CD4-positive, alpha-beta T cell (primary cell): ENCODE measurements at regions of chr9 and their contacts with region 1.

Region 1: DNA sequence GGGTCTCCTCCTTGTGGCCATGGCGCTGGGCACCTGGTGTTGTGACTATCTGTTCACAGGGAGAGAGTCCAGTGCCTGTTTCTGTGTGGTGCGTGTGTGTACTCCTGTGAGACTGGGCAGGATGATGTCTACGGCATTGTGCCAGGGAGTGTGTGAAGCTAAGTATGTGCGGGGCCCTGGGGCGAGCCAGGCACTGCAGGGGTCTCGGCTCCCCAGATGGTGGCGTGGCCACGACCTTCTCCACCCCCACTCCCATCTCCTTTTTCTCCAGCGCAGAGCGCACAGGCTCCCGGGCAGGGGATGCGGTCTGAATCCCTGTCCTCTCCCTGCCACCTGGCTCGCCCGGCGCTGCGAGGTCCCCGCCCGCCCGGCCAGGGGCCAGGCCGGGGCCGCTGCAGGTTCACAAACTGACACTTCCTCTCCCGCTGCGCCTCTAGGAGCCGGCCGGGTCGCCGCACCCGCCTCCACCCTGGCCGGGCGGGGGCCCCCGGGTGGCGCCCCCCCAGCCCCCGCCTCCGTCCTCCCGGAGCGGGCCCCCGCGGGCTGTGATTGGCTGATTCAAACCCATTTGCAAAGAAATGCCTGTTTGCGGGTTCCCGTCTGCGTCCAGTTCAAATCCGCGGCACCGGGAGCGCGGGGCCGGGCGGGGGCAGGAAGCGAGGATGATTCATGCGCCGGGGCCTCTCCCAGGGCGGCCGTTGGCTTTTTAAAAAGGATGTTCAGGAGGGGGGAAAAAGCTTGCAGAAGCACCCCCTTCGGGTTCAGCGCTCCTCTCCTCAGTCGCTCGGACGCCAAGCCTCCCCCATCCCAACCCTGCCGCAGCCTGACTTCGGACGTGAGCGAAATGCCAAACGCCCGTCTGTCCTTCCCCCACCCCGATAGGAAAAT is 790 bp downstream of the PHF19 start:
- DNase-seq: peak; percentile 53 to 93 (median 84)
- ATAC-seq: peak; percentile 49
- H3K4me3 ChIP-seq: peak overlapping the region; percentile 64
- H3K4me3 Mint-ChIP-seq: peak overlapping the region; percentile 85
- H3K27ac ChIP-seq: peak overlapping the region; percentile 87 to 93
- H3K27ac Mint-ChIP-seq: peak overlapping the region; percentile 84
- H3K4me1 ChIP-seq: peaks cover 83% of the 10 kb centered on the region
- H3K4me1 Mint-ChIP-seq: peaks cover 75% of the 10 kb centered on the region
- H3K27me3 ChIP-seq: no peaks in the 10 kb centered on the region
- H3K27me3 Mint-ChIP-seq: no peaks in the 10 kb centered on the region
- CTCF ChIP-seq: no peak

Region 2: DNA sequence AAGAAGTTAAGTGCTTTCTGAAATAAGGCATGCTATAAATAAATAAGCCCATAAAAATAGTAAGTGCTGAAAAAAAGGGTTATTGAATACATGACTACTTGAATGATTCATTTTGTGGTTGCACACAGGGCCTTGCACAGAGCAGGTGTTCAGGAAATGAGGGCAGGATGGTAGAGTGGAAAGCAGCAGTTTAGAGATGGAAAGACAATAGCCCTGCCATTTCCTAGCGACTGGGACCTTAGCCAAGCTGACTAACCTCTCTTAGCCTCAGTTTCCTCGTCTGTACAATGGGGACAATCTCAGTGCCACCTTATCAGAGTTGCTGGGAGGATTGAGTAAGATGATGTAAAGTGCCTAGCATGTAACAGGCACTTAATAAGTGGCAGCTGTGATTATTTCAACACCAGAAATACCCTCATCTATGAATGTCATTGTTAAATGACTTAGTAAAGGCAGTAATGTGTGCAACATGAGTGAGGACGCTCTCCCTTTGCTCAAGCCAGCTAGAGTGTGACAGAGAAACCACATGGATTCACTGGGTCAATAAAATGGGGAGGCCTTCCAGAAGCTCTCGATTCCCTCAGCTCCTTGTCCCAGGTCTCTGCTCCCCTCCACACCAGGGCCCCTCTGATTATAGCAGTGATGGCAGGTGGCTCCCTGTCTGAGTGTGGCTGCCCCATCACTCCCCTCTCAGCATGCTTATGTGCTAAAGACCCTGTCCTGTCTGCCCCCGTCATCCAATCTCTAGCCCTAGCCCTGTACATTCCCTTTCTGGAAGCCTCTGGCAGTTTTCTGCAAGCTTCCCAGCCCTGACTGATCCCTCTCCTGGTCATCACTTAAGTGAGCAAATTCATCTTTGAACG is 16.8 kb after region 1 on chr9:
- CTCF ChIA-PET with region 1: interaction called, 23 read pairs
- POLR2A ChIA-PET with region 1: interaction called, 327 read pairs
- intact Hi-C with region 1: loop called (anchors 1 to 2 kb)
- DNase-seq: peak in 13 of 14 experiments; percentile 50 to 89 (median 59)
- ATAC-seq: peak; percentile 55
- H3K4me3 ChIP-seq: no peak overlapping the region
- H3K4me3 Mint-ChIP-seq: peak overlapping the region; percentile 28
- H3K27ac ChIP-seq: peak overlapping the region; percentile 86 to 88
- H3K27ac Mint-ChIP-seq: peak overlapping the region; percentile 98
- H3K4me1 ChIP-seq: peaks cover 96% of the 10 kb centered on the region
- H3K4me1 Mint-ChIP-seq: peaks cover 77% of the 10 kb centered on the region
- H3K27me3 ChIP-seq: no peaks in the 10 kb centered on the region
- H3K27me3 Mint-ChIP-seq: no peaks in the 10 kb centered on the region
- CTCF ChIP-seq: no peak

Region 3: DNA sequence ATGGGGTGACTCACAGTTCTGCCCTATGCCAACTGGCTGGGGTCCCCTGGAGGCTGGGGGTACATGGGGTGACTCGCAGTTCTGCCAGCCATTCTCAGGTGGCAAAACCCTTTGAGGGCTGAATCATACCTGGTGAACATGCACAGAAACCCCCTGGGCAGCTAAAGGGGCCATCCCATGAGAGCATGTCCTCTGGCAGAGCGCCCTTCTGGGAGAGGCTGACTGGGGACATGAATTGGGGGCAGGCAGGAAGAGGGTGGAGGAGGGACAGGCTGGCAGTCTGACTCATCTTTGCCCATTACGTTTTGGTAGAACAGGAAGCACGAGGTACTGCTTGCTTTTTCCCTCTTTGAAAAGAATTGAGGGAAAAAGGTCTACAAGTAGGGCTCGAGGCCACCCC is 33.7 kb after region 1 on chr9:
- CTCF ChIA-PET with region 1: no interaction called
- POLR2A ChIA-PET with region 1: interaction called, 24 read pairs
- intact Hi-C with region 1: loop called in 1 of 2 experiments (anchors 5 kb)
- DNase-seq: peak in 11 of 14 experiments; percentile 35 to 81 (median 55)
- ATAC-seq: peak; percentile 61
- H3K4me3 ChIP-seq: no peak overlapping the region
- H3K4me3 Mint-ChIP-seq: peak overlapping the region; percentile 30
- H3K27ac ChIP-seq: peak overlapping the region; percentile 74 to 84
- H3K27ac Mint-ChIP-seq: peak overlapping the region; percentile 77
- H3K4me1 ChIP-seq: peaks cover 83% of the 10 kb centered on the region
- H3K4me1 Mint-ChIP-seq: peaks cover 81% of the 10 kb centered on the region
- H3K27me3 ChIP-seq: no peaks in the 10 kb centered on the region
- H3K27me3 Mint-ChIP-seq: no peaks in the 10 kb centered on the region
- CTCF ChIP-seq: no peak

Region 4: GRCh38 chr9:120928483-120929228 is 52.5 kb after region 1 on chr9:
- CTCF ChIA-PET with region 1: interaction called, 8 read pairs
- POLR2A ChIA-PET with region 1: interaction called, 284 read pairs
- intact Hi-C with region 1: loop called in 1 of 2 experiments (anchors 1 kb)
- DNase-seq: peak; percentile 58 to 90 (median 78)
- ATAC-seq: peak; percentile 39
- H3K4me3 ChIP-seq: peak overlapping the region; percentile 90
- H3K4me3 Mint-ChIP-seq: peak overlapping the region; percentile 88
- H3K27ac ChIP-seq: peak overlapping the region; percentile 98 to 100
- H3K27ac Mint-ChIP-seq: peak overlapping the region; percentile 100
- H3K4me1 ChIP-seq: peaks cover 90% of the 10 kb centered on the region
- H3K4me1 Mint-ChIP-seq: peaks cover 91% of the 10 kb centered on the region
- H3K27me3 ChIP-seq: no peaks in the 10 kb centered on the region
- H3K27me3 Mint-ChIP-seq: no peaks in the 10 kb centered on the region
- CTCF ChIP-seq: no peak

Region 5: DNA sequence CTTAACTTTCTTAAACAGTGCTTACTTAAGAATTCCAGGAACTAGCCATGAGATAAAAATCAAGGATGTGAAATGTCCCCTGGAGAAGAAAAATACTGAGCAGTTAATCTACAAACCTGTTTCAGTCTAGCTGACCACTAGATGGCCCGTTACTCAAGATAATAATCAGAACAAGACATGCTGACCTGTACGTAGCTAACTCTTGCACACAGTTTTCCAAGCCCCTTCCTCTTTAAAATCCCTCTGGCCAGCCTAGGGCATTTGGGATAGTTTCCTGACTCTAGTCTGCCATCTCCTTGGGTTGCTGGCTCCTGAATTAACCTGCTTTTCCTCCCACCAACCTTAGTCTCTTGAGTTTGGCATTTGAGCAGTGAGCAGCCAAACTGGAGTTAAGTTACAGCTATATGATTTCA is 109.6 kb after region 1 on chr9:
- CTCF ChIA-PET with region 1: no interaction called
- POLR2A ChIA-PET with region 1: no interaction called
- intact Hi-C with region 1: loop called in 1 of 2 experiments (anchors 5 kb)
- DNase-seq: peak in 1 of 14 experiments; percentile 4
- ATAC-seq: no peak
- H3K4me3 ChIP-seq: no peak overlapping the region
- H3K4me3 Mint-ChIP-seq: no peak overlapping the region
- H3K27ac ChIP-seq: no peak overlapping the region
- H3K27ac Mint-ChIP-seq: no peak overlapping the region
- H3K4me1 ChIP-seq: no peaks in the 10 kb centered on the region
- H3K4me1 Mint-ChIP-seq: peaks cover 5% of the 10 kb centered on the region
- H3K27me3 ChIP-seq: no peaks in the 10 kb centered on the region
- H3K27me3 Mint-ChIP-seq: no peaks in the 10 kb centered on the region
- CTCF ChIP-seq: no peak

Region 6: GRCh38 chr9:121674952-121675351 is 798.8 kb after region 1 on chr9:
- CTCF ChIA-PET with region 1: no interaction called
- POLR2A ChIA-PET with region 1: no interaction called
- intact Hi-C with region 1: no loop called
- DNase-seq: no peak
- ATAC-seq: no peak
- H3K4me3 ChIP-seq: no peak overlapping the region
- H3K4me3 Mint-ChIP-seq: no peak overlapping the region
- H3K27ac ChIP-seq: no peak overlapping the region
- H3K27ac Mint-ChIP-seq: no peak overlapping the region
- H3K4me1 ChIP-seq: no peaks in the 10 kb centered on the region
- H3K4me1 Mint-ChIP-seq: no peaks in the 10 kb centered on the region
- H3K27me3 ChIP-seq: peaks cover 5 to 7% of the 10 kb centered on the region in 2 experiments
- H3K27me3 Mint-ChIP-seq: peaks cover 19% of the 10 kb centered on the region
- CTCF ChIP-seq: no peak